Heart left ventricle (tissue), 16 donors: ENCODE measurements at regions of chr17 and their contacts with region 1.

Region 1: GRCh38 chr17:32627239-32627996 is 140.6 kb downstream of the CDK5R1 start:
- DNase-seq: no peak
- ATAC-seq: no peak
- H3K4me3 ChIP-seq: no peak overlapping the region
- H3K27ac ChIP-seq: no peak overlapping the region
- H3K4me1 ChIP-seq: peaks cover 0 to 5% (median 0%) of the 10 kb centered on the region in 12 donors
- H3K27me3 ChIP-seq: no peaks in the 10 kb centered on the region
- CTCF ChIP-seq: no peak
- POLR2A ChIP-seq: no peak

Region 2: DNA sequence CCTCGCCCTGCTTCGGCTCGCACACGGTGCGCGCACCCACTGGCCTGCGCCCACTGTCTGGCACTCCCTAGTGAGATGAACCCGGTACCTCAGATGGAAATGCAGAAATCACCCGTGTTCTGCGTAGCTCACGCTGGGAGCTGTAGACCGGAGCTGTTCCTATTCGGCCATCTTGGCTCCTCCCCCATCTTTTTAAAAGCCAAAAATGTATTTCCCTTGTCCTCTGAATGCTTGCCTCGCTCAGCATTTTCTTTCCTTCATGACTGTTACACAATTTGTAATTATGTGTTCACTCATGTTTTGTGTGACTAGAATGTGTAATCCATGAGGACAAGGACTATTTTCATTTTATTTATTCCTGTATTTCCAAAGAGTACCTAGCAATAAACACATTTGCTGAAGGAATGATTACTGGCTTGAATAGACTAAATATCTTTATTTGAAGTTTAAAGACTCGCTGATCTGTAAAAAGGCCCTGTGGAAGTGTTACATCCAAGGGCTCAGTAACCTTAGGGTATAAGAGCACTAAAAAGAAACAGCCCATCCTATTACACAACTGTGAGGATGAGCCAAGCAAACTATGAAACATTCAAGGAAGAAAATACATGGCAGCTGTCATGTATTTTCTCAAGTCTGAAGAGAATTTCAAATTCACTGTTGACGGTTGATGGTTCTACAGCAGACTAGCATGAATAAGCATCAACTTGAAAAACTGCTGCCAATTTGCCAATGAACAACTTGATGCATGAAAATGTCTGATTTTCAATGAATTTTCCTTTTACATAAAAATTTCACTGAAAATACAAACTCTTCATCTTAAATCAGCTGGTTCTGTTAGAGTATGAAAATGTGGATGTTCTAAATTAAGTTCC is 56.9 kb after region 1 on chr17:
- intact Hi-C with region 1: loop called in 1 of 10 experiments (anchors 10 kb)
- DNase-seq: no peak
- ATAC-seq: no peak
- H3K4me3 ChIP-seq: no peak overlapping the region
- H3K27ac ChIP-seq: no peak overlapping the region
- H3K4me1 ChIP-seq: no peaks in the 10 kb centered on the region
- H3K27me3 ChIP-seq: no peaks in the 10 kb centered on the region
- CTCF ChIP-seq: no peak
- POLR2A ChIP-seq: no peak